Spleen (tissue), 13 donors: ENCODE measurements at regions of chr9 and their contacts with region 1.

Region 1: DNA sequence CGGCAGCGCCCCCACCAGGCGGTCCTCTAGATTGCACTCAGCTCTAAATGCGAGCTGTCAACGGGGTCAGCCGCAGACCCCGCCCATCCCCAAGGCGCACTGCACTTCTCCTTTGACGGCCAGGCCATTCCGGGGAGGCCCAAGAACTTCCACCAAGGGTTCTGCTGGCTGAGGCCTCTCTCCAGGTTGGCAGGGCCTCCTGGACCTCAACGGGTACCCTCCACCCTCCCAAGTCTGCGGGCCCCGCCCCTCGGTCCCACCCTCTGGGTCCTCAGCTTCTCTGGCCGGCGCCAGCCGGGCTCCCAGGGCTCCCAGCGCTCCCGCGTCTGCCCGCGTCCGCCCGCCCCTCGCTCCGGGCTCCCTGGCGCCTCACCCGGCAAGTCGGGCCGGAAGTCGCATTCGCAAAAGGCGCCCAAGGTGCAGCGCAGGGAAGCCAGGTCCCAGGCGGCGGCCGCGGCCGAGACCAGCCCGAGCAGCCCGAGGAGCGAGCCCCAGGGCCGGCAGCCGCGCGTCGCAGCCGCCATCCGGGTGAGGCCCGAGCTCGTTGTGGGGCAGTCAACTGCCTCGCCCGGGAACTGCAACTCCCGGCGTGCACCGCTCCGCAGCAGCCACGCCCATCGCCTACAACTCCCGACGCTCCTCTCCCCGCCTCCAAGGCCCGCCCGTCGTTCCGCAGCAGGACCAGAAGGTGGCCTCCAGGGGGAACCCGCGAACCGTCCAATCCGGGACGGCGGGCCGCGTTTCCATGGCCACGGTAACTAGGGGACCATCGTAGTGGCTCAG is at the start of gene TOR2A:
- DNase-seq: peak; percentile 99
- H3K4me3 ChIP-seq: peak within 1 kb of the TSS; percentile 58 to 97 (median 84)
- H3K27ac ChIP-seq: peak within 1 kb of the TSS; percentile 93 to 99 (median 96)
- H3K4me1 ChIP-seq: peaks cover 17 to 67% (median 51%) of the 10 kb centered on the region in 6 donors
- H3K27me3 ChIP-seq: no peaks in the 10 kb centered on the region
- CTCF ChIP-seq: peak; percentile 91 to 100 (median 98)
- POLR2A ChIP-seq: peak in 2 of 3 donors; percentile 35 to 56
- total RNA-seq, gene TOR2A: 16.8 to 36.5 (median 24.5) TPM

Region 2: GRCh38 chr9:127586537-127586936 is 148.4 kb before region 1 on chr9:
- intact Hi-C with region 1: loop called (anchors 5 kb)
- DNase-seq: peak; percentile 80
- H3K4me3 ChIP-seq: no peak overlapping the region
- H3K27ac ChIP-seq: no peak overlapping the region
- H3K4me1 ChIP-seq: peaks cover 0 to 18% (median 10%) of the 10 kb centered on the region in 6 donors
- H3K27me3 ChIP-seq: peaks cover 0 to 36% (median 0%) of the 10 kb centered on the region in 7 donors
- CTCF ChIP-seq: peak; percentile 55 to 91 (median 80)
- POLR2A ChIP-seq: no peak

Region 3: DNA sequence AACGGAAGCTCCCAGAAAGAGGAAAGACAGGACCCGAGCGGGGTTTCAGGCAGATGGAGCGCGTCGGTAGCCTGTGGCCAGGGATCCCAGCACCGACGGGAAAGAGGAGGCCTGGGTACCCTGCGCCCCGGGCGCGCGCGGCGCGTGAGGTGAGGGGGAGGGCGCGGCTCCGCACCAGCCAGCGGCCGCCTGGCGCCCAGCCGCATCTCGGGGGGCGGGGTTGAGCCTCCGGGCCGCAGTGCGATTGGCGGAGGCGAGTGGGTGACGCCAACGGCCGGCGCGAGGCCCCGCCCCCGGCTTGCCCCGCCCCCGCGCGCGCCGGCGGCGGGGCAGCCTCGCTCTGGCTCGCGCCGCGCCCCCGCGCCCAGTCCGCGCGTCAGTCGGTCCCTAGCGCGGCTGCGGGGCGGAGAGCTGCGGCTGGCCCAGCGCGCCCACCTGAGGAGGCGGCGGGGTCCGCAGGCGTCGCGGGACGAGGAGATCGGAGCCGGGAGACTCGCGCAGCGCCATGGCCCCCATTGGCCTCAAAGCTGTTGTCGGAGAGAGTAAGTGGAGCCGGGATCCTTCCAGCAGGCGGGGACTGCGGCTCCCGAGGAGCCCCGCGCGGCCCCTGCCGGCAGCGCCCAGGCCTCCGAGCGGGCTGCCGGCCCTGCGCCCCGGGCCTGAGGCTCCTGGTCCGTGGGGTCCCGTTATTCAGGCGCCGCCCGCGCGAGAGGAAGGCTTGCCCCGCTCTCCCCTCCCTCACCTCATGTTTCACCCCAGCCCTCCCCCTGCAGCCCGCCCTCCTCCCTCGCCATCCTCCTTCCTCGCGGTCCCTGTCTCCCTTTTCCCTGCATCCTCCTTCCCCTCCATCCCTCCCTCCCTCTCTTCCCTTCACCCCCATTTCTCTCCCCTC is 122.8 kb before region 1 on chr9 and contains the start of gene STXBP1:
- intact Hi-C with region 1: no loop called
- DNase-seq: peak; percentile 94
- H3K4me3 ChIP-seq: peak within 1 kb of the TSS; percentile 65 to 83 (median 78)
- H3K27ac ChIP-seq: peak within 1 kb of the TSS; percentile 44 to 92 (median 87)
- H3K4me1 ChIP-seq: peaks cover 18 to 50% (median 38%) of the 10 kb centered on the region in 6 donors
- H3K27me3 ChIP-seq: peaks cover 0 to 69% (median 4%) of the 10 kb centered on the region in 7 donors
- CTCF ChIP-seq: peak in 1 of 11 experiments; percentile 29
- POLR2A ChIP-seq: peak in 1 of 3 donors; percentile 39
- total RNA-seq, gene STXBP1: 26.0 to 75.7 (median 38.5) TPM

Region 4: GRCh38 chr9:127785023-127785932 is 50.3 kb after region 1 on chr9:
- intact Hi-C with region 1: loop called (anchors 5 kb)
- DNase-seq: peak; percentile 99
- H3K4me3 ChIP-seq: peak overlapping the region; percentile 96 to 100 (median 100)
- H3K27ac ChIP-seq: peak overlapping the region; percentile 89 to 99 (median 96)
- H3K4me1 ChIP-seq: peaks cover 48 to 89% (median 82%) of the 10 kb centered on the region in 6 donors
- H3K27me3 ChIP-seq: no peaks in the 10 kb centered on the region
- CTCF ChIP-seq: peak; percentile 94 to 99 (median 96)
- POLR2A ChIP-seq: no peak

Region 5: DNA sequence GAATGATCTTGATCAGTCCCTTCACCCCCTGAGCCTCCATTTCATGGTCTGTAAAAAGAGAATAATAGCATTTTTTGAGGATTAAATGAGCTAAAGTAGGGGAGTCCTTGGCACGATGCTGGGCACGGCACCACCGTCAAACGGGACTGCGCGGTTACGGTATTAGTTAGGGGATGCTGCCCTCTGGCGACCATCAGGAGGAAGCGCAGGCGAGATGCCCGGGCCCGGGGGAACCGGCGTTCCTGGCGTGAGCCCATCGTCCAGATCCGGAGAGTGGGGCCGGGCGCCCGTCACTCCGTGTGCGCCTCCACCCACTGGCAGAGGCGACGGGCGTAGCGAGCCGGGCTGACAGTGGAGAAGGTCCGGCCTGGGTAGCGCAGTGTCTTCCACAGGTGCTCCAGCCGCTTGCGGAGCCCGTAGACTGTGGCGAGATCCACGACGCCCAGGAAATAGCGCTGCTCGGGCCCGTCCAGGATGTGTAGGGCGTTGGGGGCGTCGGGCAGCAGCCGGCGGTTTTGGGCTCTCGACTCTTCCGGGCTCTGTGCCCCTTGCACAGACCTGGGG is 186.7 kb after region 1 on chr9:
- intact Hi-C with region 1: loop called (anchors 5 kb)
- DNase-seq: peak; percentile 94
- H3K4me3 ChIP-seq: peak overlapping the region in 3 of 8 donors; percentile 9 to 54 (median 26)
- H3K27ac ChIP-seq: no peak overlapping the region
- H3K4me1 ChIP-seq: peaks cover 40 to 65% (median 49%) of the 10 kb centered on the region in 6 donors
- H3K27me3 ChIP-seq: peaks cover 0 to 36% (median 5%) of the 10 kb centered on the region in 7 donors
- CTCF ChIP-seq: peak; percentile 96 to 100 (median 99)
- POLR2A ChIP-seq: no peak